OCI-LY7 (cell line): ENCODE measurements at regions of chr1 and their contacts with region 1.

Region 1: DNA sequence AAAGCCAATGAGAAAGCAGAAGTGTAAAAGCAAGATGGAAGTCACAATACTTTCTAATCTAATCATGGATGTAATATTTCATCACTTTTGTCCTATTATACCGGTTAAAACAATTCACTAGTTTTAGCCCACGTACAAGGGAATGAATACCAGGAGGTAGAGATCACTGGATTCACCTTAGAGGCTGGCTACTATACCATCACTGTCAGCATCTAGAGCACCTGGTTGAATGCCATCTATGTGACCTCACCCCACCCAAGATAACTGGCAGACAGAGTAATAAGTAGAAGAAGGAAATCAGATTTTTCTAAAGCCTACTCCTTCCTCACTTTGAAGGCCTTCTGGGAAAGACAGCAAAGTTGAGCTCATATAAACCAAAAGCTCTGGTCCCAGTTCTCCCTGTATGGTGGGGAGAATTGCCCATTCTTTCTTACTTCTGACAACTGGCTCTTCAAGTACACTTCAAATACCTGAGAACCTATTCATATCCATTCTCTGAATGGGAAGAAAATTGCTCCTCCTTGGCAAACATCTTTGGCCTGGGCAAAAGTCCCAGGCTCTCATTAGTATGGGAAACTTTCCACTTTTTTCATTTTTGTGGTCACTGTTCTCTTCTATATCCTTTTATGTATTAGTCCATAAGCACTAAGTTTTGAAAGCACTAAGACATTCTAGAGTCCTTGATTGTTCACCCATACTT is 24.8 kb downstream of the HSD3B1 start:
- DNase-seq: no peak
- H3K4me3 ChIP-seq: no peak overlapping the region
- H3K27ac ChIP-seq: no peak overlapping the region
- H3K4me1 ChIP-seq: no peaks in the 10 kb centered on the region
- CTCF ChIP-seq: no peak

Region 2: DNA sequence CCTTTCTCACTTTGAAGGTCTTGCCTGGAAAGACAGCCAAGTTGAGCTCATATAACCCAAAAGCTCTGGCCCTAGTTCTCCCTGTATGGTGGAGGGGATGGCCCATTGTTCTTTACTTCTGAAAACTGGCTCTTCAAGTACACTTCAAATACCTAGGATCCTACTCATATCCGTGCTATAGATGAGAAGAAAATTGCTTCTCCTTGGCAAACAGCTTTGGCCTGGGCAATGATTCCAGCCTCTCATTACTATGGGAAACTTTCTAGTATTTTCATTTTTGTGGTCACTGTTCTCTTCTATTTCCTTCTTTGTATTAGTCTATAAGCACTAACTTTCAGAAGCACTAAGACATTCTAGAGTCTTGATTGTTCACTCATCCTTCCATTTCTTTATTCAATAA is 62.6 kb after region 1 on chr1:
- CTCF ChIA-PET with region 1: no interaction called
- POLR2A ChIA-PET with region 1: no interaction called
- intact Hi-C with region 1: loop called (anchors 10 kb)
- DNase-seq: no peak
- H3K4me3 ChIP-seq: no peak overlapping the region
- H3K27ac ChIP-seq: no peak overlapping the region
- H3K4me1 ChIP-seq: no peaks in the 10 kb centered on the region
- CTCF ChIP-seq: no peak

Region 3: DNA sequence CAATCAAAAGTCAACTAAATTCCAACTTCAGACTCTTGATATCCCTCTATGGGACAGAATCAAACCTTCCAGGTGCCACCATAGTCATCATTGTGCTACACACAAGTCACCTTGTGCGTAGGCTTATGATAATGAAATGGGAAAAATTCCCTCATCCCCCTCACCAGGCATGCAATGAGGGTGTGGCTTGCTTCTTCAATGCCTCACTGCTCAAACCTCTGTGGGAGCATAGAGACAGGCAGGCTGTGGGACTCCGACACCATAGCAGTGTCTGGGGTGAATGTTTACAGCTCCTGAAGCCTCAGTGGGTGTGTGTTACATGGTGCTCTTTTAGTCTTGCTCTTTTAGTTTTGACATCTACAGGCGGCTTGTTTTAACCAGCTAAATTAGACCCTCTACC is 73.9 kb after region 1 on chr1:
- CTCF ChIA-PET with region 1: no interaction called
- POLR2A ChIA-PET with region 1: no interaction called
- intact Hi-C with region 1: no loop called
- DNase-seq: no peak
- H3K4me3 ChIP-seq: no peak overlapping the region
- H3K27ac ChIP-seq: no peak overlapping the region
- H3K4me1 ChIP-seq: no peaks in the 10 kb centered on the region
- CTCF ChIP-seq: no peak